ENCODE measurements at regions of chr16 and their contacts with region 1.

Region 1: DNA sequence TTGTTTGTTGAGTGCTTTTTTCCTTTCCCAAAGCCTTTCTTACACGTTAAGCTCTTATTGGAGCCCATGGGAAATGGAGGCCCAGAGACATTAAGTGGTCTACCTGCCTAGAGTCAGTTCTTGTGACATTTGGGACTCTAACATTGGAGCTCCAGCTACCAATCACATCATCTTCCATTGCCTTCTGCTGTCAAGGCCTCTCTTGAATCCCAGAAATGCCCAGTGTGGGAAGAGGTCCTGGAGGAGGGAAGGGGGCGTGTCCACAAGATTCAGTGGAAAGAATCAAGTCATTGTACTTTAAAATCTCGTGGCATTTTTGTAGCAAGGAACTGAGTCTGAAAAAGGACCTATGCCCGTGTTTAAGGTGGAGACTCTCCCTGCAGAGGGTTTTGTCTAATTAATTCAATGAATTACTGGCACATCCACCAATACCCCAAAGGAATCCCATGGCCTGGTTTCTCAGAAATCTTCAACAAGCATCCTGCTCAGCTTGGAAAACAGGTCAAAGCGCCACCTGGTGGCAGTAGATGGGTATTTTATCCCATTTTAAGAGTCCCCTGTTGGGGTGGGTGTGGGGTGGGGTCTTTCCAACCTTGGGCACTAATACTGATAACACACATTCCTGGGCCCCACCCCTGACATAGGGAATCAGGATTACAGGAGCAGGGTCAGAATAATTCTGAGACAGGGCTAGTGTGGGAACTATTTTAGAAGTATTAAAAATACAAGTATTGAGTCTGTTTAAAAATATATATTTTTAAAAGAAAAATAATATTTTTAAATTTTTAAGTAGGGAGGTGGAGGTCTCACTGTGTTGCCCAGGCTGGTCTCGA is 24.6 kb downstream of the GPT2 start:
- DNase-seq: peak in 1 of 2 donors; percentile 43
- ATAC-seq: peak; percentile 33 to 73 (median 64)
- H3K4me3 ChIP-seq: no peak overlapping the region
- H3K27ac ChIP-seq: no peak overlapping the region
- H3K4me1 ChIP-seq: peaks cover 0 to 7% (median 0%) of the 10 kb centered on the region in 9 donors
- H3K27me3 ChIP-seq: no peaks in the 10 kb centered on the region
- CTCF ChIP-seq: peak; percentile 60 to 91 (median 77)

Region 2: DNA sequence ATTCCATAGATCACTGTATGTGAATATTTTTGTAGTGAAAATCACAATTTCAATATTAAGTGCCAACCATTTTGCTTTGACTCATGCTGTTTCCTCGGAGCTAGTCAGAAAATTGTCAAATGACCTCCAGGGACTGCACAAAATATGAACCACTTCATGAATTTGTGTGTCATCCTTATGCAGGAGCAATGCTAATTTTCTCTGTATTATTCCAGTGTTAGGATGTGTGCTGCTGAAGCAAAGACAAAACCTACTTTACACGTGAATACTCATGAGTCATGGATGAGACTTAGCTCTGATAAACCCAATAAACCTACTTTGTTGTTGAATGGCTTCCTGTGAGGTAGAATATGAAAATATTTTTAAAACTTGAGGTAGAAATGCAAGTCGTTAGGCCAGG is 352.8 kb before region 1 on chr16:
- intact Hi-C with region 1: loop called in 1 of 10 experiments (anchors 10 kb)
- DNase-seq: no peak
- ATAC-seq: no peak
- H3K4me3 ChIP-seq: no peak overlapping the region
- H3K27ac ChIP-seq: no peak overlapping the region
- H3K4me1 ChIP-seq: no peaks in the 10 kb centered on the region
- H3K27me3 ChIP-seq: peaks cover 0 to 50% (median 20%) of the 10 kb centered on the region in 7 donors
- CTCF ChIP-seq: no peak

Region 3: GRCh38 chr16:46862555-46863447 is 46.0 kb before region 1 on chr16:
- intact Hi-C with region 1: no loop called
- DNase-seq: no peak
- ATAC-seq: no peak
- H3K4me3 ChIP-seq: no peak overlapping the region
- H3K27ac ChIP-seq: no peak overlapping the region
- H3K4me1 ChIP-seq: peaks cover 0 to 4% (median 0%) of the 10 kb centered on the region in 9 donors
- H3K27me3 ChIP-seq: peaks cover 0 to 4% (median 0%) of the 10 kb centered on the region in 7 donors
- CTCF ChIP-seq: no peak